Panc1 (cell line): ENCODE measurements at regions of chr5 and their contacts with region 1.

Region 1: DNA sequence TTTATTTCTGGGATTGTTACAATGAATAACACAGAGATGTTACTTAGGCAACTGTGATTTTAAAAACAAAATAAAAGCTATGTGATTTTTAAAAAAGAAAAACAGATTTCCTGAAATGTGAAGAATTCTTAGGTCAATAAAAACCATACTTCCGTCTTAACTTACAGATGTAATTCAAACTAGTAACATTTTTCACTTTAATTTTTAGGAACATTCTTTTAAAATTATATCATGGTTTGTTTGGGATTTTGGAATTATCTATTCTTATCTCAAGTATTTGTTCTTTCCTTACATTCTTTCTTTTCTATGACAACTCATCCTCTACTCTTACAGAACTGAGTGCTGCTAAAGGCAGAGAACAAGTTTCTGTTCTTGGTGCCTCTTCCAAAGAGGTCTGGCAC is 159.5 kb downstream of the RAPGEF6 start:
- DNase-seq: no peak
- ATAC-seq: no peak
- H3K4me3 ChIP-seq: no peak overlapping the region
- H3K27ac ChIP-seq: no peak overlapping the region
- H3K4me1 ChIP-seq: no peaks in the 10 kb centered on the region
- H3K27me3 ChIP-seq: no peaks in the 10 kb centered on the region
- CTCF ChIP-seq: no peak

Region 2: GRCh38 chr5:132029609-132030330 is 554.2 kb after region 1 on chr5:
- CTCF ChIA-PET with region 1: no interaction called
- POLR2A ChIA-PET with region 1: interaction called, 29 read pairs
- in situ Hi-C with region 1: no loop called
- intact Hi-C with region 1: no loop called
- DNase-seq: no peak
- ATAC-seq: no peak
- H3K4me3 ChIP-seq: no peak overlapping the region
- H3K27ac ChIP-seq: no peak overlapping the region
- H3K4me1 ChIP-seq: no peaks in the 10 kb centered on the region
- H3K27me3 ChIP-seq: peaks cover 20% of the 10 kb centered on the region
- CTCF ChIP-seq: no peak